K562 (cell line): ENCODE measurements at regions of chrX and their contacts with region 1.

Region 1: GRCh38 chrX:140057001-140057411 is 91.7 kb upstream of the CXorf66 start:
- DNase-seq: peak; percentile 57 to 76 (median 71)
- ATAC-seq: peak; percentile 99
- H3K4me3 ChIP-seq: no peak overlapping the region
- H3K27ac ChIP-seq: no peak overlapping the region
- H3K4me1 ChIP-seq: no peaks in the 10 kb centered on the region; a peak in 1 of 5 replicates
- H3K27me3 ChIP-seq: no peaks in the 10 kb centered on the region
- CTCF ChIP-seq: peak; percentile 76 to 86 (median 82)
- EP300 ChIP-seq: no peak
- POLR2A ChIP-seq: no peak
- RAD21 ChIP-seq: peak; percentile 43 to 71; a peak in 3 of 4 replicates

Region 2: DNA sequence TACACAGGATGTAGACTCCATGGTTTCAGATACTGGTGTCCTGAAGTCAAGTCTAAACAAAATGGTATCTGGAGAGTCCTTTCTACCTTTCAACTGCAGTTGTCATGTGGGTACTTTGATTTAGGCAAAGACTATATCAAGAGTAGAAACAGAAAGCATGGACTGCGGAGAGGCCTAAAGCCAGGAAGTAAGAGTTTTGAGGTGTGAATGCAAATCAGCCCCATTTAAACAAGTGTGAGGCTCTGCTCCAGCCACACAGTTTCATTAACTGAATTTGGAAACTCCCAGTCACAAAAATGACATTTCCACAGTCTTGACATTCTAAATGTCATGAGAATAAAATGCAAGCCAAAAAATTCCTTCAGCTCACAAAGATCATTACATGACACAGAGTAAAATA is 261.8 kb before region 1 on chrX:
- CTCF ChIA-PET with region 1: no interaction called
- POLR2A ChIA-PET with region 1: no interaction called
- in situ Hi-C with region 1: no loop called
- intact Hi-C with region 1: no loop called
- DNase-seq: no peak
- ATAC-seq: no peak
- H3K4me3 ChIP-seq: no peak overlapping the region
- H3K27ac ChIP-seq: no peak overlapping the region
- H3K4me1 ChIP-seq: no peaks in the 10 kb centered on the region
- H3K27me3 ChIP-seq: no peaks in the 10 kb centered on the region
- CTCF ChIP-seq: no peak
- EP300 ChIP-seq: no peak
- POLR2A ChIP-seq: no peak
- RAD21 ChIP-seq: no peak

Region 3: DNA sequence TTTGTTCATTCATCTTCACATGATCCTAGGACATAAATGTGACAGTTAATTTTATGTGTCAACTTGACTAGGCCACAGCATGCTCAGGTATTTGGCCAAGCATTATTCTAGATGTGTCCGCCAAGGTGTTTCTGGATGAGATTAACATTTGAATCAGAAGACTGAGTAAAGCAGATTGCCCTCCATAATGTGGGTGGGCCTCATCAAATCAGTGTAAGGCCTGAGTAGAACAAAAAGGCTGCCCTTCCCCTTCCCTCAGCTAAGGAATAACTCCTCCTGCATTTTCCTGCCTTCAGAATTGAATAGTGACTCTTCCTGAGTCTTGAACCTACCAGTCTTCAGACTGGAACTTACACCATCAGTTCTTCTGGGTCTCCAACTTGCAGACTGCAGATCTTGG is 142.6 kb before region 1 on chrX:
- CTCF ChIA-PET with region 1: no interaction called
- POLR2A ChIA-PET with region 1: no interaction called
- in situ Hi-C with region 1: no loop called
- intact Hi-C with region 1: no loop called
- DNase-seq: no peak
- ATAC-seq: no peak
- H3K4me3 ChIP-seq: no peak overlapping the region
- H3K27ac ChIP-seq: no peak overlapping the region
- H3K4me1 ChIP-seq: no peaks in the 10 kb centered on the region
- H3K27me3 ChIP-seq: no peaks in the 10 kb centered on the region
- CTCF ChIP-seq: no peak
- EP300 ChIP-seq: no peak
- POLR2A ChIP-seq: no peak
- RAD21 ChIP-seq: no peak

Region 4: DNA sequence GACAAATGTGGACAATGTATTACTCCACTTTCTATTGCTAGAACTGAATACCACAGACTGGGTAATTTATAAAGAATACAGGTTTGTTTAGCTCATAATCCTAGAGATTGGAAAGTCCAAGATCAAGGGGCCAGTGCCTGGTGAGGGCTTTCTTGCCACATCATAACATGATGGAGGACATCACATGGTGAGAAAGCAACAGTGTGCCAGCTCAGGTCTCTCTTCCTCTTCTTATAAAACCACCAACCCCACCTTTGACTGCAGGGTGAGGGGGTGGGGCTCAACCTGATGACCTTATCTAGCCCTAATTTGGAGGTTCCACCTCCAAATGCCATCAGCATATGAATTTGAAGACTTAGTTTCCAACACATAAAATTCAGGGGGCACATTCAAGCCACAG is 14.0 kb after region 1 on chrX:
- CTCF ChIA-PET with region 1: no interaction called
- POLR2A ChIA-PET with region 1: no interaction called
- in situ Hi-C with region 1: no loop called
- intact Hi-C with region 1: no loop called
- DNase-seq: no peak
- ATAC-seq: no peak
- H3K4me3 ChIP-seq: no peak overlapping the region
- H3K27ac ChIP-seq: no peak overlapping the region
- H3K4me1 ChIP-seq: no peaks in the 10 kb centered on the region
- H3K27me3 ChIP-seq: no peaks in the 10 kb centered on the region; a peak in 1 of 5 replicates
- CTCF ChIP-seq: no peak
- EP300 ChIP-seq: no peak
- POLR2A ChIP-seq: no peak
- RAD21 ChIP-seq: no peak

Region 5: GRCh38 chrX:140104760-140105159 is 47.8 kb after region 1 on chrX:
- CTCF ChIA-PET with region 1: no interaction called
- POLR2A ChIA-PET with region 1: interaction called, 3 read pairs
- in situ Hi-C with region 1: no loop called
- intact Hi-C with region 1: loop called (anchors 5 kb)
- DNase-seq: no peak
- ATAC-seq: no peak
- H3K4me3 ChIP-seq: no peak overlapping the region
- H3K27ac ChIP-seq: no peak overlapping the region
- H3K4me1 ChIP-seq: no peaks in the 10 kb centered on the region
- H3K27me3 ChIP-seq: no peaks in the 10 kb centered on the region
- CTCF ChIP-seq: no peak
- EP300 ChIP-seq: no peak
- POLR2A ChIP-seq: no peak
- RAD21 ChIP-seq: no peak

Region 6: DNA sequence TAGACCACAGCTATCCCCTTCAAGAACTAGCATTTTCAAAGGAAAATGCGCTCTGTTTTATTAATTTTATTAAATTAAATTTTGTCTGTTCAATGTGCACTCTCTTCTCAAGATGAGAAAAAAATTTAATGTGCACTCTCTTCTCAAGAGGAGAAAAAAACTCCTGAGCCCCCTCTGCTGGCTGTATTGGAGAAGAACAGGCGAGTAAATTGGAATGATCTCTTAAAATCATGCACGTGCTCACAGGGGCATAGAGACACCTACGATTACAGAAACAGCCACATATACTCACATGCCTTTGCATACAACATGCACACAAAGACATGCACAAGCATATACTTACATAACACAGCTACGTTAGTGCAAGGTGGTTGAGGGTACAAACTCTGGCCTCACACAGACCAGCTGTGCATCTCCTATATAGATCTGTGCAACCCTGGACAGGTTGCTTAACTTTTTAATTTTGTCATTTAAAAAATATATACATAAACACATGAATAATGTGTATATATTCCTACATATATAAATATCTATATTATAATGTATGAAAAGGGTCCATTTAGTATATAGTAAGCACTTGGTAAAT is 84.5 kb after region 1 on chrX:
- CTCF ChIA-PET with region 1: interaction called, 3 read pairs
- POLR2A ChIA-PET with region 1: no interaction called
- in situ Hi-C with region 1: no loop called
- intact Hi-C with region 1: loop called (anchors 1 kb)
- DNase-seq: peak; percentile 29 to 49 (median 40)
- ATAC-seq: peak; percentile 68
- H3K4me3 ChIP-seq: no peak overlapping the region
- H3K27ac ChIP-seq: no peak overlapping the region
- H3K4me1 ChIP-seq: no peaks in the 10 kb centered on the region
- H3K27me3 ChIP-seq: no peaks in the 10 kb centered on the region
- CTCF ChIP-seq: peak; percentile 34 to 57 (median 47); a peak in 5 of 6 replicates
- EP300 ChIP-seq: no peak
- POLR2A ChIP-seq: no peak
- RAD21 ChIP-seq: peak; percentile 11 to 46; a peak in 2 of 4 replicates

Region 7: GRCh38 chrX:140664939-140665338 is 607.9 kb after region 1 on chrX:
- CTCF ChIA-PET with region 1: no interaction called
- POLR2A ChIA-PET with region 1: no interaction called
- in situ Hi-C with region 1: no loop called
- intact Hi-C with region 1: loop called (anchors 5 kb)
- DNase-seq: peak in 3 of 4 experiments; percentile 3 to 8 (median 5)
- ATAC-seq: no peak
- H3K4me3 ChIP-seq: no peak overlapping the region
- H3K27ac ChIP-seq: no peak overlapping the region
- H3K4me1 ChIP-seq: no peaks in the 10 kb centered on the region
- H3K27me3 ChIP-seq: no peaks in the 10 kb centered on the region
- CTCF ChIP-seq: 0 out of 6 replicates have a peak, but pooled peaks of 1 of the 3 experiments have one; percentile 15
- EP300 ChIP-seq: no peak
- POLR2A ChIP-seq: no peak
- RAD21 ChIP-seq: peak in 1 of 2 experiments; percentile 56; a peak in 2 of 4 replicates

Region 8: DNA sequence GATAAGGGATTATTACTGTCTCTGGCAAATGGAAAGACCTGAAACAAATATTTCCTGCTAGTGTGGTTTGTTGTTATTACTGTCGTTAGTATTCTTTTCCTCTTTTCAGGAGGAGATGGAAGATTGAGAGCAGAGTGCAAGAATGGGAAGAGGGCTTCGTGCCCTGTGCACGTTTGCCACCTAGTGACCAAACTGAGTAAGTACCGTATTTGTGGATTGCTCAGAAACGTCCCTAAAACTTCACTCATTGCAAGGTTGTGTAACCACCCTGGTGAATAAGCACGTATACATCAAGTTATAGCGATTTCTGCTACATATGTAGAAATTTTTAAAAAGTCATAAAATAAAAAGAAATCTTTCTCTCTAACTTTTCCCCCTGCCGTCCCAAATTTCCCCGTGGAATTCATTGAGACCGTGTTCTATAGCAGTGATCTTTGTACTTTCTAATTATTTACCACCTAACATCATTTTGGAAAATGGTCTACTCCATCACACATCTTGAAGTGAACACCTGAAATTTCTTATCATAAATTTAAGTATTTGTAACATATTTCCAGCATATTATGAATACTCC is 676.9 kb after region 1 on chrX:
- CTCF ChIA-PET with region 1: no interaction called
- POLR2A ChIA-PET with region 1: no interaction called
- in situ Hi-C with region 1: no loop called
- intact Hi-C with region 1: loop called (anchors 2 kb)
- DNase-seq: peak; percentile 22 to 52 (median 36)
- ATAC-seq: peak; percentile 89
- H3K4me3 ChIP-seq: no peak overlapping the region
- H3K27ac ChIP-seq: no peak overlapping the region
- H3K4me1 ChIP-seq: no peaks in the 10 kb centered on the region
- H3K27me3 ChIP-seq: no peaks in the 10 kb centered on the region
- CTCF ChIP-seq: peak; percentile 43 to 68 (median 57); a peak in 4 of 6 replicates
- EP300 ChIP-seq: no peak
- POLR2A ChIP-seq: no peak
- RAD21 ChIP-seq: peak; percentile 58 to 69

Region 9: DNA sequence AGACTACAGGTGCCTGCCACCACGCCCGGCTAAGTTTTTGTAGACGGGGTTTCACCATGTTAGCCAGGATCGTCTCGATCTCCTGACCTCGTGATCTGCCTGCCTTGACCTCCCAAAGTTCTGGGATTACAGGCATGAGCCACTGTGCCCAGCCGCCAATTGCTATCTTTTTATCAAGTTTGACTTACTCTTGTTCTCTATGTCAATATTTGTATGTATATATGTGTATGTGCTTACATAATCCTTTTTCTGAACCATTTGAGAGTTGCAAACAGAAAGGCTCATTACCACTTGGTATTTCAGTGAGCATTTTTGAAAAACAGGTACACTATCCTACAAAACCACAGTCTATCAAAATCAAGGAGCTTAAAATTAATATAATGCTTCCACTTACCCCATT is 1135.2 kb after region 1 on chrX:
- CTCF ChIA-PET with region 1: no interaction called
- POLR2A ChIA-PET with region 1: no interaction called
- in situ Hi-C with region 1: no loop called
- intact Hi-C with region 1: no loop called
- DNase-seq: no peak
- ATAC-seq: no peak
- H3K4me3 ChIP-seq: no peak overlapping the region
- H3K27ac ChIP-seq: no peak overlapping the region
- H3K4me1 ChIP-seq: no peaks in the 10 kb centered on the region
- H3K27me3 ChIP-seq: no peaks in the 10 kb centered on the region
- CTCF ChIP-seq: no peak
- EP300 ChIP-seq: no peak
- POLR2A ChIP-seq: no peak
- RAD21 ChIP-seq: no peak